ENCODE measurements at regions of chr12 and their contacts with region 1.

Region 1: DNA sequence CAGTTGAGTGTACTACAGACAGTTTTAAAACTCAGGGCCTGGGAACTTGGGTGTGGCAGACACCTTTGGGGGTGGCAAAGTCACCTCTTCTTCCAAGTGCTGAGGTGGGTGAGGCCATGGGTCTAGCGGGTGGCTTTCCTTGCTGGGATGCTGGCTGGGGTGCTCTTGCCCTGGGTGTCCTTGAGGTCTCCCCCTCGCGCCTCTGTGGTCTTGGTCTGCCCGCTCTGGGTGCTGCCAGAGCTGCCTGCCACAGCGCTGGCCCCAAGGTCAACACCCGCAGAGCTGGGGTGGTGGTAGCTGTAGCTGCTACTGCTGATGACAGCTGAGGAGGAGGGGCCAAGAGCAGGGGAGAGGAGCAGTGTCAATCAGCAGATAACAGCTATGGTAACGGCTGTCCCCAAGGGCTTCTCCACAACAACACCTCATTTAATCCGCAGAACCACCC is 6.8 kb downstream of the KRT74 start:
- DNase-seq: peak in 1 of 10 donors; percentile 50

Region 2: GRCh38 chr12:52380271-52380694 is 186.6 kb before region 1 on chr12:
- intact Hi-C with region 1: loop called (anchors 5 kb)
- DNase-seq: peak in 9 of 10 donors; percentile 44 to 93 (median 61)

Region 3: GRCh38 chr12:52416383-52416750 is 150.5 kb before region 1 on chr12:
- intact Hi-C with region 1: no loop called
- DNase-seq: peak in 1 of 10 donors; percentile 6

Region 4: GRCh38 chr12:52687497-52688385 is 120.9 kb after region 1 on chr12:
- intact Hi-C with region 1: no loop called
- DNase-seq: no peak